Endothelial cell of umbilical vein (primary cell): ENCODE measurements at regions of chr9 and their contacts with region 1.

Region 1: DNA sequence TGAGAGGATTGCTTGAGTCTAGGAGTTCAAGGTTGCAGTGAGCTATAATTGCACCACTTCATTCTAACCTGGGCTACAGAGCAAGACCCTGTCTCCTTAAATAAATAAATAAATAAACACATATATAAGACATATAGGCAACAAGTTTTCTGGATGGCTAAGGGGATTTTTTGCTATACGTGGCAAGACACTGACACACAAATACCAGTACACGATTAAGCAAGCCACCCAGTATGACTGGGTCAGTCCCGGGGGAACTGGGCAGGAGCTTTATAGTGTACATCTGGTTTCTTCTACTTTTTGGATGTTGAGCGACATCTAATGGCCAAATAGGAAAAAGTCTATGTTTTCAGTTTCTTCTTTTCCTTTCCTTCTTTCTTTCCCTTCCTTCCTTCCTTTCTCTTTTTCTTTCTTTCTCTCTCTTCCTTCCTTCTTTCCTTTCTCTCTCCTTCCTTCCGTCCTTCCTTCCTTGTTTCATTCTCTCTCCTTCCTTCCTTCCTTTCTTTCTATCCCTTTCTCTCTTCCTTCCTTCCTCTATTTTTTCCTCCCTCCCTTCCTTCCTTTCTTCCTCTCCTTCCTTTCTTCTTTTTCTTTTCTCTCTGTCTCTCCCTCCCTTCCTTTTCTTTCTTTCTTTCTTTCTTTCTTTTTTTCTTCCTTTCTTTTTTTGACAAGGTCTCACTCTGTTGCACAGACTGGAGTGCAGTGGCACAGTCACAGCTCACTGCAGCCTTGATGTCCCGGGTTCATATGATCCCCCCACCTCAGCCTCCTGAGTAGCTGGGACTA is 47.0 kb upstream of the PLIN2 start:
- DNase-seq: peak; percentile 68
- H3K4me3 ChIP-seq: no peak overlapping the region
- H3K27ac ChIP-seq: no peak overlapping the region
- H3K4me1 ChIP-seq: peaks cover 15% of the 10 kb centered on the region
- H3K27me3 ChIP-seq: no peaks in the 10 kb centered on the region
- CTCF ChIP-seq: peak; percentile 40 to 47
- POLR2A ChIP-seq: no peak

Region 2: DNA sequence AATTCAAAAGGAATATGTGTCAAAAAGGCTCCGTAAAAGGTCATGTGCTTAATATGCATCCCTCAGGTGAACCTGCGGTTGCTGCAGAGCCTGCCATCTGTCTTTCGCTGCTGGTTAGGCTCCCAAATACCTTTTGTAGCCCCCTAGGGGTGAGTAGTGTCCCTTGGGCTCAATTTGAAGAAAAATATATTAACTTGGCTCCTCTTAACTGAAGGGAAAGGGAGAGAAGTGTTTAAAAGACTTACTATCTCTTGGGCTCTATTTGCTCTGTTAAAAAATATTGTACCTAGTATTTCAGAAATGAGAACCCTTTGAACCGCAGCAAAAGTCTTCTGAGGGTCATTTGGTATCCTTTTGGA is 876.8 kb before region 1 on chr9:
- CTCF ChIA-PET with region 1: no interaction called
- POLR2A ChIA-PET with region 1: no interaction called
- dilution Hi-C with region 1: no loop called
- intact Hi-C with region 1: no loop called
- DNase-seq: no peak
- H3K4me3 ChIP-seq: no peak overlapping the region
- H3K27ac ChIP-seq: peak overlapping the region; percentile 64
- H3K4me1 ChIP-seq: peaks cover 15% of the 10 kb centered on the region
- H3K27me3 ChIP-seq: no peaks in the 10 kb centered on the region
- CTCF ChIP-seq: peak; percentile 32 to 52
- POLR2A ChIP-seq: no peak

Region 3: DNA sequence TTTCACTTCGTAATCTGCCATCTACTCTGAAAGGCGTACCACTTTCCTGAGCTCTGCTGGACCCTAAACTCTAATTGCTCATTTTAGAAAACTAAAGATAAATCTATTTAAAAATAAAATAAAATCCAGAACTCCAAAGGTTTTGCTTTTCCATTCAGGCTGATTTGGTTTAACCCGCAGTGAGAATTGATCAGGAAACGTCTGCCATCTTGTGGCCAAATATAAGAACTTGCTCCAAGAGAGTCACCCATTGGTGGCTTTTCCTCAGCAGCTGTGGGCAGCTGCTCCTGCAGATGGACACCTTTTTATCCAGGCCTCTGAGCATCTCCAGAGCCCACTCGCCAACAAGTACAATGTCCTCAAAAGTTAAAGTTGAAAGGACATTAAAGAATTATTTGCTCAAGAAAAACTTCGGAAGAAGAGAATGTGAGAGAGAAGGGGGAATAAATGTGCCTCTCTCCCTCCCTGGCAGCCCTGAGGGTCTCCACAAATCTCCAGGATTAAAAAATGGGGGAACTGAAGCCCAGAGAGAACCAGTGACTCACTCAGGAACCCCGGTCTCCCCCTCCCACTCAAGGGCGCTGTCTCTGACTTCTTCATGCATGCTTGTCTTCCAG is 145.4 kb before region 1 on chr9:
- CTCF ChIA-PET with region 1: interaction called, 16 read pairs
- POLR2A ChIA-PET with region 1: no interaction called
- dilution Hi-C with region 1: no loop called
- intact Hi-C with region 1: loop called (anchors 1 kb)
- DNase-seq: peak; percentile 59
- H3K4me3 ChIP-seq: no peak overlapping the region
- H3K27ac ChIP-seq: no peak overlapping the region
- H3K4me1 ChIP-seq: no peaks in the 10 kb centered on the region
- H3K27me3 ChIP-seq: no peaks in the 10 kb centered on the region
- CTCF ChIP-seq: peak; percentile 58 to 66
- POLR2A ChIP-seq: no peak

Region 4: GRCh38 chr9:19085295-19085694 is 89.0 kb before region 1 on chr9:
- CTCF ChIA-PET with region 1: interaction called, 40 read pairs
- POLR2A ChIA-PET with region 1: no interaction called
- dilution Hi-C with region 1: no loop called
- intact Hi-C with region 1: loop called (anchors 1 kb)
- DNase-seq: peak; percentile 19
- H3K4me3 ChIP-seq: no peak overlapping the region
- H3K27ac ChIP-seq: no peak overlapping the region
- H3K4me1 ChIP-seq: no peaks in the 10 kb centered on the region
- H3K27me3 ChIP-seq: no peaks in the 10 kb centered on the region
- CTCF ChIP-seq: peak in 1 of 2 donors; percentile 13
- POLR2A ChIP-seq: no peak

Region 5: GRCh38 chr9:19116107-19116790 is 58.1 kb before region 1 on chr9:
- CTCF ChIA-PET with region 1: interaction called, 14 read pairs
- POLR2A ChIA-PET with region 1: no interaction called
- dilution Hi-C with region 1: no loop called
- intact Hi-C with region 1: loop called (anchors 1 kb)
- DNase-seq: no peak
- H3K4me3 ChIP-seq: no peak overlapping the region
- H3K27ac ChIP-seq: no peak overlapping the region
- H3K4me1 ChIP-seq: peaks cover 30% of the 10 kb centered on the region
- H3K27me3 ChIP-seq: no peaks in the 10 kb centered on the region
- CTCF ChIP-seq: no peak
- POLR2A ChIP-seq: no peak

Region 6: GRCh38 chr9:19161257-19162025 is 12.9 kb before region 1 on chr9:
- CTCF ChIA-PET with region 1: interaction called, 13 read pairs
- POLR2A ChIA-PET with region 1: no interaction called
- dilution Hi-C with region 1: no loop called
- intact Hi-C with region 1: no loop called
- DNase-seq: peak; percentile 82
- H3K4me3 ChIP-seq: no peak overlapping the region
- H3K27ac ChIP-seq: no peak overlapping the region
- H3K4me1 ChIP-seq: peaks cover 11% of the 10 kb centered on the region
- H3K27me3 ChIP-seq: no peaks in the 10 kb centered on the region
- CTCF ChIP-seq: no peak
- POLR2A ChIP-seq: no peak

Region 7: DNA sequence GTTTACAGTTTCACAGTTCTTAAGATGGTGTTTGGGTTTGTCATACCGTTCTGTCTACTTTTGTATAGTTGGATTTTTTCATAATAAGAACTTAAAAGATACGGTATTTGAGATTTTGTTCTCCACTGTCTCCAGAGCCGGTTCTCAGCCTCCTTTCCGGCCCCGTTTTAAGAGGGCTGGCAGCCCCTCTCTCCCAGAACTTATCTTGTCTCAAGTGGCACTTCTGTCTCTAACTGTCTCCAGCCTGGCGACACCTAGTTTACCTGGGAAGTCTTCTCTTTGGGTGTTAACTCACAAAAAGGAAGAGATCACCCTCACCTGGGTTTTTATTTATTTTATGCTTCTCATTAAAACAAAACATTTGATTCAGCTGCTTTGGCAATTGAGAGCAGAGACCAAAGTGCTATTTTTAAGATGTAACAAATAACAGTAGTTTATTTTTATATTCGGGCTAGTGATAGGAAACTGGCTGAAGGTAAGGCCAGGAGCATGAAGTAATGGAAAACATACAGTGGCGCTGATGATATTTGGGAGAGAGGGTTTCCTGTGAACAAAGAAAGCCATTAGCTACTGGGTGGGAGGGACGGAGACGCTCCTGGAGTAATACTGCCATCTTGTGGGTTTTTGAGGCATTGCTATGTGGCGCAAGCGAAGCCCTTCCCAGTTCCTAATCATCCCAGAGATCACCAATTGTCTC is 282.8 kb after region 1 on chr9:
- CTCF ChIA-PET with region 1: interaction called, 15 read pairs
- POLR2A ChIA-PET with region 1: no interaction called
- dilution Hi-C with region 1: no loop called
- intact Hi-C with region 1: loop called (anchors 1 kb)
- DNase-seq: peak; percentile 80
- H3K4me3 ChIP-seq: no peak overlapping the region
- H3K27ac ChIP-seq: no peak overlapping the region
- H3K4me1 ChIP-seq: peaks cover 6% of the 10 kb centered on the region
- H3K27me3 ChIP-seq: no peaks in the 10 kb centered on the region
- CTCF ChIP-seq: peak; percentile 88 to 93
- POLR2A ChIP-seq: no peak